Caco-2 (cell line): ENCODE measurements at regions of chr11 and their contacts with region 1.

Region 1: GRCh38 chr11:78645226-78646202 is 70.8 kb upstream of the NARS2 start:
- DNase-seq: peak; percentile 82 to 90
- H3K4me3 ChIP-seq: no peak overlapping the region
- H3K4me3 Mint-ChIP-seq: no peak overlapping the region
- H3K27ac Mint-ChIP-seq: no peak overlapping the region
- H3K4me1 ChIP-seq: no peaks in the 10 kb centered on the region
- H3K4me1 Mint-ChIP-seq: no peaks in the 10 kb centered on the region
- H3K27me3 ChIP-seq: no peaks in the 10 kb centered on the region
- H3K27me3 Mint-ChIP-seq: peaks cover 11% of the 10 kb centered on the region
- CTCF ChIP-seq: peak; percentile 98 to 99

Region 2: DNA sequence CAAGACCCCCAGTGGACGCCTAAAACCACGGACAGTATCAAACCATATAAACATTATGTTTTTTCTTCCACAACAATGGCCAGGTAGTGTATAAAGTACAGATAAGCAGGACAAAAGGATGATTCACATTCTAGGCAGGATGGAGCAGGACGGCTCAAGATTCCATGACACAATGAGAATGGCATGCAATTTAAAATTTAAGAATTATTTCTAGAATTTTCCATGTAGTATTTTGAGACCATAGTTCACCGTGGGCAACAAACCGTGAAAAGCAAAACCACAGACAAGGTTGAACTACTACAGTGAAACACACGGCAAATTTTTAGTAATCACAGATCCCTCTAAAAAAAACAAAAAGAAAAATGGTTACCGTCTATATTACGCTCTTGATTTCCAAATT is 78.3 kb before region 1 on chr11:
- CTCF ChIA-PET with region 1: no interaction called
- POLR2A ChIA-PET with region 1: no interaction called
- intact Hi-C with region 1: no loop called
- DNase-seq: no peak
- H3K4me3 ChIP-seq: no peak overlapping the region
- H3K4me3 Mint-ChIP-seq: no peak overlapping the region
- H3K27ac Mint-ChIP-seq: no peak overlapping the region
- H3K4me1 ChIP-seq: peaks cover 18% of the 10 kb centered on the region
- H3K4me1 Mint-ChIP-seq: no peaks in the 10 kb centered on the region
- H3K27me3 ChIP-seq: no peaks in the 10 kb centered on the region
- H3K27me3 Mint-ChIP-seq: no peaks in the 10 kb centered on the region
- CTCF ChIP-seq: no peak

Region 3: GRCh38 chr11:78659326-78660270 is 14.1 kb after region 1 on chr11:
- CTCF ChIA-PET with region 1: interaction called, 13 read pairs
- POLR2A ChIA-PET with region 1: no interaction called
- intact Hi-C with region 1: no loop called
- DNase-seq: peak in 1 of 2 experiments; percentile 42
- H3K4me3 ChIP-seq: no peak overlapping the region
- H3K4me3 Mint-ChIP-seq: no peak overlapping the region
- H3K27ac Mint-ChIP-seq: no peak overlapping the region
- H3K4me1 ChIP-seq: no peaks in the 10 kb centered on the region
- H3K4me1 Mint-ChIP-seq: no peaks in the 10 kb centered on the region
- H3K27me3 ChIP-seq: peaks cover 2% of the 10 kb centered on the region; the same call in 1 of the 2 replicates
- H3K27me3 Mint-ChIP-seq: peaks cover 17% of the 10 kb centered on the region
- CTCF ChIP-seq: no peak

Region 4: DNA sequence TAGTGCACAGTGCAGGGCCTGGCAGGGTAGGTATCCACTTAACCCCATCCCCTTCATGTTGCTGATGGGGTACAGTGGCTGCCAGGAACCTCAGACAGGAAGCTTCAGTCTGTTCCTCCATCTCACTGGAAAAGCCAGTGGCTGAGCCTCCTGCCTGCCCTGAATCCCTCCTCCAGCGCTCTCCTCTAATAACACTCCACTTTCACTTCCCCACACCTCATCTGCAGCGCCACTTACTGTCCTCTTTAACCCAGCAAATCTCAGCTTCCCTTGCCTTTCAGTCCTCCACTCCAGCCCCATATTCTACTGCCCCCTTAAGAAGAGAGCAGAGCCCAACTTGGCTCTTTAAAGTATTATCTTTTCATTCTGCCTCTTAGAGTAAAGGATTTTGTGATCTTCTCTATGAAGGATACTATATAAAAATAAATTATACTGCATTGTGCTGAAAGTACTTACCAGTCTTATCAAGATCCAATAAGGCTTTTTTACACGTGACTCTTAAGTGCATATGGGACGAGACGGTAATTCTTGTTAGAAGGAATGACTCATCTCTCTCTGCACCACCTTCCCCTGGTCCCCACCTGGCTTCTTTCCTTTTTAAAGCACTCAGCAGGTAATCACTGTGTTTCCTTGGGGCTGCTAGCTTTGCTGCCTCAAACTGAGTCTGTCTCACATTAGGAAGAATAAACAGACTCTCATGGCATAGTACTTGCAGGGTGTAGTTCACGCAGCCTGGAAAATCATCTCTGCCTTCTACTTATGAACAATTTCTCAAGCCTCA is 167.2 kb after region 1 on chr11:
- CTCF ChIA-PET with region 1: interaction called, 6 read pairs
- POLR2A ChIA-PET with region 1: no interaction called
- intact Hi-C with region 1: loop called (anchors 1 kb)
- DNase-seq: peak in 1 of 2 experiments; percentile 31
- H3K4me3 ChIP-seq: no peak overlapping the region
- H3K4me3 Mint-ChIP-seq: no peak overlapping the region
- H3K27ac Mint-ChIP-seq: peak overlapping the region; percentile 12
- H3K4me1 ChIP-seq: no peaks in the 10 kb centered on the region
- H3K4me1 Mint-ChIP-seq: peaks cover 7% of the 10 kb centered on the region
- H3K27me3 ChIP-seq: no peaks in the 10 kb centered on the region
- H3K27me3 Mint-ChIP-seq: no peaks in the 10 kb centered on the region
- CTCF ChIP-seq: peak in 1 of 2 experiments; percentile 25

Region 5: DNA sequence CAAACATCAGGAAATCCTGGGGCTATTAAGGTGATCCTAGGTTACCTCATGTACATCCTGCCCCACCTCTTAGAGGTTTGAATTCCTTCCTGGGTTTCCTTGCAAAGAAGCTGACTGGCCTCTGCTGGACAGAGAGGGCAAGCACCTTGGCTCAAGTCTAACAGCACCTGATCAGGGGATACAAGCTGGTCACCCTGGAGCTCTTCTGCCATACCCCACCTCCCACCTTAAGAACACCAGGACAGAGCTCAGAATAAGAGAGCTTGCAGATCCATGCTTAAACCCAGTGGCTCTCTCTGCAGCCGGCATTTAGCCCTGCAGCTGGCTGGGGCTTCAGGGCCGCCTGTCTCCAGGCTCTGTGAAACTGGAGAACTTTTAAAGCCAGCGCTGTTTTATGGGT is 315.7 kb after region 1 on chr11:
- CTCF ChIA-PET with region 1: interaction called, 61 read pairs
- POLR2A ChIA-PET with region 1: no interaction called
- intact Hi-C with region 1: loop called (anchors 1 kb)
- DNase-seq: peak; percentile 69 to 70
- H3K4me3 ChIP-seq: no peak overlapping the region
- H3K4me3 Mint-ChIP-seq: no peak overlapping the region
- H3K27ac Mint-ChIP-seq: no peak overlapping the region
- H3K4me1 ChIP-seq: no peaks in the 10 kb centered on the region
- H3K4me1 Mint-ChIP-seq: no peaks in the 10 kb centered on the region
- H3K27me3 ChIP-seq: 0 out of 2 replicates have a peak, but pooled peaks cover 1% of the 10 kb centered on the region
- H3K27me3 Mint-ChIP-seq: peaks cover 7% of the 10 kb centered on the region
- CTCF ChIP-seq: peak; percentile 73 to 84

Region 6: GRCh38 chr11:79087238-79087960 is 441.9 kb after region 1 on chr11:
- CTCF ChIA-PET with region 1: interaction called, 20 read pairs
- POLR2A ChIA-PET with region 1: no interaction called
- intact Hi-C with region 1: no loop called
- DNase-seq: peak; percentile 72 to 84
- H3K4me3 ChIP-seq: no peak overlapping the region
- H3K4me3 Mint-ChIP-seq: peak overlapping the region; percentile 15
- H3K27ac Mint-ChIP-seq: peak overlapping the region; percentile 89
- H3K4me1 ChIP-seq: peaks cover 40% of the 10 kb centered on the region
- H3K4me1 Mint-ChIP-seq: peaks cover 28% of the 10 kb centered on the region
- H3K27me3 ChIP-seq: no peaks in the 10 kb centered on the region
- H3K27me3 Mint-ChIP-seq: no peaks in the 10 kb centered on the region
- CTCF ChIP-seq: no peak

Region 7: GRCh38 chr11:79263001-79263400 is 617.5 kb after region 1 on chr11:
- CTCF ChIA-PET with region 1: interaction called, 6 read pairs
- POLR2A ChIA-PET with region 1: no interaction called
- intact Hi-C with region 1: loop called (anchors 10 kb)
- DNase-seq: no peak
- H3K4me3 ChIP-seq: no peak overlapping the region
- H3K4me3 Mint-ChIP-seq: no peak overlapping the region
- H3K27ac Mint-ChIP-seq: no peak overlapping the region
- H3K4me1 ChIP-seq: 0 out of 2 replicates have a peak, but pooled peaks cover 4% of the 10 kb centered on the region
- H3K4me1 Mint-ChIP-seq: no peaks in the 10 kb centered on the region
- H3K27me3 ChIP-seq: no peaks in the 10 kb centered on the region
- H3K27me3 Mint-ChIP-seq: peaks cover 9% of the 10 kb centered on the region
- CTCF ChIP-seq: no peak